ENCODE measurements at regions of chr20 and their contacts with region 1.

Region 1: GRCh38 chr20:51525241-51526129 is 17.0 kb downstream of the NFATC2 start:
- DNase-seq: peak; percentile 43
- H3K4me3 ChIP-seq: peak overlapping the region; percentile 56
- H3K27ac ChIP-seq: peak overlapping the region; percentile 61
- H3K4me1 ChIP-seq: peaks cover 59% of the 10 kb centered on the region
- CTCF ChIP-seq: no peak

Region 2: DNA sequence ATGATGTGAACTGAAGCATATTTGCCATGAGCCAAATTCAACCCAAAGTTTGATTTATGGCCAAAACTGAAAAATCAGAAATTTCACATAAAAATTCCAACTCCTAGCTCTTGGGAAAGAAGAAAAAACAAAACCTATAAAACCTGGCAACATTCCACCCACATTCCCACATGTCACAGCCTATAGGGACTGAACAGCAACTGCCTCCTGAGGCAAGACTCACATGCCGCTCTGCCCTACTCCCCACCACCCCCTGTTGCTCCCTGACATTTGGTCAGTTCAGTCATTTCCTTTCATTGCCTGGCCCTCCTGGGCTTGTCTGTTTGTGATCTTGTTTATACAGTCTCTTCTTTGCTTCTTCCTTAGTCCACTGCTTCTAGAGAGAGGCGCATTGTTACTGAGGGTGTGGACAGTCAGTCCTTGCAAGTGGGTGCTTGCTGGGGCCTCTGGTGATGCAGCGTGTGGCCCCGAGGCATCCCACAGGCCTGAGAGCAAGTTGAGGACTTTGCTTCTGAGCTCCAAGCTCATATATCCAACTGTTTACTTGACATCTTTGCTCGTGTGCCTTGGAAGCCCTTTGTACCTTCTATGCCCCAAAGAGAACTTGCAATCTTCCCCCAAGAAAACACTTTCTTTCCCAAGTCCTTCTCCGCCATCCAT is 14.4 kb before region 1 on chr20:
- CTCF ChIA-PET with region 1: interaction called, 3 read pairs
- POLR2A ChIA-PET with region 1: interaction called, 4 read pairs
- intact Hi-C with region 1: loop called (anchors 2 kb)
- DNase-seq: no peak
- H3K4me3 ChIP-seq: no peak overlapping the region
- H3K27ac ChIP-seq: no peak overlapping the region
- H3K4me1 ChIP-seq: peaks cover 22% of the 10 kb centered on the region
- CTCF ChIP-seq: no peak

Measured in OCI-LY7 (cell line).